A549 (cell line): ENCODE measurements at regions of chr17 and their contacts with region 1.

Region 1: DNA sequence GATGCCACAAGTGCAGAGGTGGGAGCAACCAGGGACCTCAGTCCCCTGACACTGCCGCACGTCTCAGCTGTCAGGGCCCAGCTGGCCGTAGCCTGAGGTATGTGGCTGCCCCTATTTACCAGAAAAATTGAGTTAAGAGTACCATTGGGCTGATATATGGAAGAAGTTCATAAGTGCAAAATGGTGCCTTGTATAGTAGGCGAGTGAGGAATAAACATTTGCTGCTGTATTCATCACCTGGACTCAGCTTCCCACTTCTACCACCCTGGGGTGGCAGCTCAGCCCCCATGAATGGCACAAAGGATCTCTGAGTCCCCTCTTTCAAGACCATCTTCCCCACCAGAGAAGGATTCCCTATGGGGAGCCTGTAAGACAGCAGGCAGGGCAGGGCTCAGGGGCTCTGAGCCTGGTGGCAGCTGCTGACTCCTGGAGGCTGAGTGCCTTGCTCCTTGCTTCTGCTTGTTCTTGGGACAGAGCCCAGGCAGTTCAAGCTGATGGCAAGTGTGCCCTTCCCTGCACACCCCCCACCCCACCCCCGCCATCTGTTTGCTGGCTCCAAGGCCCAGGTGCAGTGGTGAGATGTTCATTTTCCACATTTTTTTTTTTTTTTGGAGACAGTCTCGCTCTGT is 29.0 kb downstream of the TRPV2 start:
- DNase-seq: peak in 1 of 2 experiments; percentile 37
- ATAC-seq: peak; percentile 19 to 28; a peak in 4 of 6 replicates
- H3K4me3 ChIP-seq: no peak overlapping the region
- H3K27ac ChIP-seq: peak overlapping the region in 1 of 2 experiments; percentile 99; a peak in 3 of 6 replicates
- H3K4me1 ChIP-seq: peaks cover 48% of the 10 kb centered on the region
- CTCF ChIP-seq: no peak
- EP300 ChIP-seq: no peak
- POLR2A ChIP-seq: no peak
- RAD21 ChIP-seq: no peak

Region 2: DNA sequence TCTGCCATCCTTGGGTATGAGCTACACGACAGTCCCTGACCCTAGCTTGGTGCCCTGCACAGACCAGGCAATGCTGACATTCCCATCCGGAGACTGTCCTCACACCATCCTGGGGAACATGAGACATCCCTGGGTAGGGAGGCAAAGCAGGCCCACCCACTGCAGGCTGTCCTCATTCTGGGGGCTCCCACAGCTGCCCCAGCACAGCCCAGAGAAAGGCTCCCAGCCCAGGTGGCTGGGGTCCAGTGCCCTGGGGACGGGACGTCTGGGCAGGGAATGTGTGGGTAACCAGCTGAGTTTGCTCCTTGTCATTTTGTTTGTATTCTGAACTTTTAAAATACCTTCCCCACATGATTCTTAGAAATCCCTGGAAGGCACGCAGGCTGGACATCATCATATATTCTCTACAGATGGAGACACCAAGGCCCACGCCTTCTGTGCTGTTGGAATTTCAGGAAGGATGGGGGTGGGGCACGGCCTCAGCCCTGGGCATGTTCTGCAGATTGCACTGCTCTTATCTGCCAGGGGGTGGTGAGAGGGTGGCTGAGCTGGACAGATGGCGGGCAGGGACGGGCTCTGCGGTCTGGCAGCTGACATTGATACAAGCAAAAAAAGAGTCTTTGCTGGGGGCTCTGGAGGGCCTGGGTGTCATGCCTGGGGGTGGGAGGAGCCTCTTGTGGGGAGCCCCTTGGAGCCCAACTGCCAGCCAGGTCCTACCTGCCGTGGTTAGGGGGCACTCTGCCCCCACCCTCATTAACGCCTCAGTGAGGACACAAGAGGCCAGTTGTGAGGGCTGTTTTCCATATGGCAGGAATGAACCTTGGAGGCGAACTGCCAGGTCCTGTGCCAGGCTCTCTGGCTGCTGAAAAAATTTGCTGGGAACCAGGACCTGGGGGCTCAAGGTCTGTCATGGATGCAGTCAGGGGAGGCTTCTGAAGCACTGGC is 19.3 kb after region 1 on chr17:
- CTCF ChIA-PET with region 1: interaction called, 89 read pairs
- POLR2A ChIA-PET with region 1: no interaction called
- DNase-seq: peak in 1 of 2 experiments; percentile 62
- ATAC-seq: peak; percentile 57 to 81; a peak in 5 of 6 replicates
- H3K4me3 ChIP-seq: no peak overlapping the region
- H3K27ac ChIP-seq: peak overlapping the region in 1 of 2 experiments; percentile 12; a peak in 1 of 6 replicates
- H3K4me1 ChIP-seq: peaks cover 10% of the 10 kb centered on the region; the same call in 2 of the 3 replicates
- CTCF ChIP-seq: no peak
- EP300 ChIP-seq: no peak
- POLR2A ChIP-seq: no peak
- RAD21 ChIP-seq: no peak